HepG2 (cell line): ENCODE measurements at regions of chr3 and their contacts with region 1.

Region 1: GRCh38 chr3:101928890-101929289 is 79.6 kb downstream of the NFKBIZ start:
- DNase-seq: no peak
- ATAC-seq: no peak
- H3K4me3 ChIP-seq: no peak overlapping the region
- H3K27ac ChIP-seq: no peak overlapping the region
- H3K4me1 ChIP-seq: no peaks in the 10 kb centered on the region
- H3K27me3 ChIP-seq: no peaks in the 10 kb centered on the region; a peak in 2 of 5 replicates
- CTCF ChIP-seq: no peak
- EP300 ChIP-seq: no peak
- POLR2A ChIP-seq: no peak
- RAD21 ChIP-seq: no peak

Region 2: GRCh38 chr3:100994809-100995208 is 934.1 kb before region 1 on chr3:
- CTCF ChIA-PET with region 1: no interaction called
- POLR2A ChIA-PET with region 1: no interaction called
- in situ Hi-C with region 1: no loop called
- intact Hi-C with region 1: no loop called
- DNase-seq: no peak
- ATAC-seq: no peak
- H3K4me3 ChIP-seq: no peak overlapping the region
- H3K27ac ChIP-seq: no peak overlapping the region
- H3K4me1 ChIP-seq: peaks cover 14% of the 10 kb centered on the region
- H3K27me3 ChIP-seq: no peaks in the 10 kb centered on the region
- CTCF ChIP-seq: no peak
- EP300 ChIP-seq: no peak
- POLR2A ChIP-seq: no peak
- RAD21 ChIP-seq: no peak

Region 3: GRCh38 chr3:102106416-102107097 is 177.7 kb after region 1 on chr3:
- CTCF ChIA-PET with region 1: no interaction called
- POLR2A ChIA-PET with region 1: no interaction called
- in situ Hi-C with region 1: no loop called
- intact Hi-C with region 1: loop called (anchors 10 kb)
- DNase-seq: no peak
- ATAC-seq: no peak
- H3K4me3 ChIP-seq: no peak overlapping the region
- H3K27ac ChIP-seq: no peak overlapping the region
- H3K4me1 ChIP-seq: no peaks in the 10 kb centered on the region
- H3K27me3 ChIP-seq: no peaks in the 10 kb centered on the region
- CTCF ChIP-seq: no peak
- EP300 ChIP-seq: no peak
- POLR2A ChIP-seq: no peak
- RAD21 ChIP-seq: no peak